Activated CD8-positive, alpha-beta T cell treated with anti-CD3 and anti-CD28 coated beads for 36 hours (primary cell): ENCODE measurements at regions of chr19 and their contacts with region 1.

Region 1: DNA sequence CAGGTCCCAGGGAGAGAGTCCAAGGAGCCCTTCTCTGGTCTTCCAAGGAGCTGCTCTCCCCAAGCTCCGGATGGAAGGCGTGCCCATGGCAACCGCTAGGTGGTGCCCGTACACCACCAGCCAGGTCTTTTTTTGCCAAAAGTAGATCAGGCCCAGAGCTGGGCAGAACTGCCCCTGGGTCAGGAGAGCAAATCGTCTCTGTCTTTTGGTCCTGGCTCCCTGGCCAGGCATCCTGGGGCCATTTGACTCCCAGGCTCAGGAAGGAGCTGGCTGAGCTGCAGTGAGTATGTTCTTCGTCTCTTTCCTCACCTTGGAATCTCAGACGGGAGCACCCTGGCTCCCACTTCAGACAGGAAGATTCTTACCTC is 24.6 kb upstream of the BCL3 start:
- DNase-seq: peak; percentile 84
- ATAC-seq: peak; percentile 92
- H3K4me3 Mint-ChIP-seq: no peak overlapping the region
- H3K27ac Mint-ChIP-seq: no peak overlapping the region
- H3K4me1 Mint-ChIP-seq: peaks cover 44% of the 10 kb centered on the region
- H3K27me3 Mint-ChIP-seq: no peaks in the 10 kb centered on the region
- CTCF ChIP-seq: peak; percentile 95

Region 2: DNA sequence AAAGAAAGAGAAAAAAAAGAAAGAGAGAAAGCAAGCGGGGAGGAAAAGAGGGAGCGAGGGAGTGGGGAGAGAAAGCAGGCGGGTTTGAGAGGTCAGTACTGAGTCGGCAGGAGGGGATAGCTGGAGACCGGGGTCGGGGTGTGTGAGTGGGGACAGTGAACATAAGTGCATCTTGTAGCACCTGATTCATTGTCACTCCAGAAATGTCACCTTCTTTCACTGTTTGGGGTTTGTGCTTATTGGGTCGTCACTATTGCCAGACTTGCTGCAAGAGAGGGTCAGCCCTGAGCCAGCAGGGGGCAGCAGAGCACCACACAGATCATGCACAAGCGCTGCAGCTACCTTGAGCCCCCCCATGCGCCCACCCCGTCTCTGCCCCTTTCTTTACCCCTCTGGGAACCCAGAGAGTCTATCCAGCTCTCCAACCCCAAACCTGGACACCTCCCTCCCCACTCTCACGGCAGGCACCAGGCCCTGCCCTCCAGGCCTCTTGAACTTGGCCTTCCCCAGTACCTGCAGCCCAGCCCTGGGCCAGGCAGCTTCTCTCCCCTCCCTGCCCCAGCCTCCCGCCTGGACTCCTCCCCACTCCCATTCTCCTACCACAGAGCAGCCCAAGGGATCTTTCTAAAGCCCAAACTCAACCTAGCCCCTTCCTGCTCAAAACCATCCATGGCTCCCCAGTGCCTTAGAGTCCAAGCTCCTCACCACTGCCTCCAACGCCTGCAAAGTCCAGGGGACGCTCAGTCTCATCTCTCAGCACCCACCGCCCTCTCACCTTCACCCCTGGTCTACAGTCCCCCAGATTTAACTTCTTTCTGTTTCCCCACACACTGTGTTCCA is 34.7 kb before region 1 on chr19:
- CTCF ChIA-PET with region 1: interaction called, 93 read pairs
- POLR2A ChIA-PET with region 1: interaction called, 3 read pairs
- intact Hi-C with region 1: no loop called
- DNase-seq: peak; percentile 90
- ATAC-seq: peak; percentile 46
- H3K4me3 Mint-ChIP-seq: no peak overlapping the region
- H3K27ac Mint-ChIP-seq: no peak overlapping the region
- H3K4me1 Mint-ChIP-seq: peaks cover 43% of the 10 kb centered on the region
- H3K27me3 Mint-ChIP-seq: peaks cover 21% of the 10 kb centered on the region
- CTCF ChIP-seq: peak; percentile 91

Region 3: GRCh38 chr19:44741841-44742352 is 18.0 kb after region 1 on chr19:
- CTCF ChIA-PET with region 1: interaction called, 20 read pairs
- POLR2A ChIA-PET with region 1: interaction called, 3 read pairs
- intact Hi-C with region 1: no loop called
- DNase-seq: peak; percentile 46
- ATAC-seq: peak; percentile 49
- H3K4me3 Mint-ChIP-seq: no peak overlapping the region
- H3K27ac Mint-ChIP-seq: peak overlapping the region; percentile 46
- H3K4me1 Mint-ChIP-seq: peaks cover 17% of the 10 kb centered on the region
- H3K27me3 Mint-ChIP-seq: no peaks in the 10 kb centered on the region
- CTCF ChIP-seq: no peak

Region 4: GRCh38 chr19:44770550-44771257 is 46.8 kb after region 1 on chr19:
- CTCF ChIA-PET with region 1: interaction called, 474 read pairs
- POLR2A ChIA-PET with region 1: interaction called, 12 read pairs
- intact Hi-C with region 1: loop called (anchors 1 kb)
- DNase-seq: peak; percentile 99
- ATAC-seq: peak; percentile 100
- H3K4me3 Mint-ChIP-seq: peak overlapping the region; percentile 28
- H3K27ac Mint-ChIP-seq: peak overlapping the region; percentile 80
- H3K4me1 Mint-ChIP-seq: peaks cover 22% of the 10 kb centered on the region
- H3K27me3 Mint-ChIP-seq: no peaks in the 10 kb centered on the region
- CTCF ChIP-seq: peak; percentile 58

Region 5: DNA sequence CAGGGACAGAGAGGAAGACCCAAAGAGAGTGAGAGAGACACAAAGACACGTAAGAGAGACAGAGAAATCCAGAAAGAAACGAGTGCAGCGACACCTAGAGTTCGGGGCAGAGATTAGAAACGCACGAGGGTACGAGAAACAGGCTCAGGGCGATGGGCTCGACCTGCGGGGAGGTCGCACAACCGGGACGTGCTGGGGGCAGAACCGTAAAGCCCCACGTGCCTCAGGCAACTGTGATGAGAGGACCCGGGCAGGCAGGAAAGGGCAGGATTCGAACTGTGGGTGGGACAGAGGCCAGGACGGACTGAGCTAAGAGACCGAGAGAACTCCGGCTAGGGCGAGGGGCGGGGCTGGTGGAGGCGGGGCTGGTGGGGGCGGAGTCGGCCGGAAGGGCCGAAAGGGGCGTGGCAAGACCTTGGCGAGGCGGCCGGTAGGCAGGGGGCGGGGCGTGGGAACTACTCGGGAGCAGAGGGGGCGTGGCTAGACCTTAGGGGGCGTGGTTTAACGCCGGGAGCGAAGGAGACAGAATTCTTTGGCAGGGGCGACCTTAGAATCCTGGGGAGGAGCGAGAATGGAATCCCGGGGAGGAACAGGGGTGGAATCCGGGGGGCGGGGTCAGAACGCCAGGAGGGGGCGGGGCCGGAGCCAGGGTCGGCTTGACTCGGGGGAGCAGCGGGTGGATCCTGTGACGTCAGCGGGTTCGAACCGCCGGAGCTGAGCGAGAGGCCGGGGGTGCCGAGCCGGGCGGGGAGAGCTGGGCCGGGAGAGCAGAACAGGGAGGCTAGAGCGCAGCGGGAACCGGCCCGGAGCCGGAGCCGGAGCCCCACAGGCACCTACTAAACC is 121.9 kb after region 1 on chr19 and contains the start of gene NECTIN2:
- CTCF ChIA-PET with region 1: interaction called, 15 read pairs
- POLR2A ChIA-PET with region 1: no interaction called
- intact Hi-C with region 1: no loop called
- DNase-seq: peak; percentile 95
- ATAC-seq: peak; percentile 83
- H3K4me3 Mint-ChIP-seq: peak within 1 kb of the TSS; percentile 76
- H3K27ac Mint-ChIP-seq: peak within 1 kb of the TSS; percentile 76
- H3K4me1 Mint-ChIP-seq: peaks cover 20% of the 10 kb centered on the region
- H3K27me3 Mint-ChIP-seq: peaks cover 25% of the 10 kb centered on the region
- CTCF ChIP-seq: no peak
- total RNA-seq, gene NECTIN2: 0.36 to 0.65 TPM